Activated CD4-positive, alpha-beta memory T cell treated with anti-CD3 and anti-CD28 coated beads for 36 hours (primary cell): ENCODE measurements at regions of chr5 and their contacts with region 1.

Region 1: DNA sequence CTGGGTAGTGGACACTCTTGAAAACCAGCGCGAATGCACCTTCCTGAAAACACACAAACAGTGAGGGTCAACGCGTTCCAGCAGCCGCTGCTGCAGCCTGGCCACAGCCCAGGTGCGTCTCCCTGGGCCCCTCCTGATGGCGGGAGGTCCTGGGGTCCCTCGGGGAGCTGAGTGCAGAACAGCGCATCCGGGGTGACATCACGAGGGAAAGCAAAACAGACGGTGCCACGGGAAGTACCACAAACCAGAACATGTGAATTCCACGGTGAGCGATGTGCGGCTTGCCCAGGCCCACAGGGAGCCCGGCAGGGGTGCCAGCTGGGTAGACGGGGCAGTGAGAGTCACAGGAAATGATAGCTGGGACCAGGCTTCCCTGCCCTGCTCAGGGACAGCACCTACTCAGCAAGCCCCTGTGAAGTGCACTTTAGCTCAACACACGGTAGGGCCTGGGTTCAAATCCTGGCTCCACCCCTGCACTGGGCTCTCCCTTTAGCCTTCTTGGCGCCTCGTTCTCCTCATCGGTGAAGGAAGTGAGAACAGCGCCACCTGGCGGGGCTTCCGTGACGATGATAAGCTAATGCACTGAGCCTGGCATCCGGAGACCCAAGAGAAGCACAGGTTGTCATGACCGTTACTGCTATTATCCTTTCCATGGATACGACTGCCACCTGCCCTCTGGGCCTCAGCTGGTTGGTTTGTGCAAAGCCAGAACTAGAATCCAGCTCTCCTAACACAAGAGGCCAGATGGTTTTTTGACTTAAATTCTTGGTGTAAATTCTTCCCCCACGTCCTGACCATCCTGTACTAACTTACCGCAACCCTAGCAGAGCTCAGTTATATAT is 24.6 kb downstream of the GFPT2 start:
- DNase-seq: peak; percentile 90
- H3K4me3 Mint-ChIP-seq: no peak overlapping the region
- H3K27ac Mint-ChIP-seq: no peak overlapping the region
- H3K4me1 Mint-ChIP-seq: no peaks in the 10 kb centered on the region
- H3K27me3 Mint-ChIP-seq: peaks cover 6% of the 10 kb centered on the region

Region 2: DNA sequence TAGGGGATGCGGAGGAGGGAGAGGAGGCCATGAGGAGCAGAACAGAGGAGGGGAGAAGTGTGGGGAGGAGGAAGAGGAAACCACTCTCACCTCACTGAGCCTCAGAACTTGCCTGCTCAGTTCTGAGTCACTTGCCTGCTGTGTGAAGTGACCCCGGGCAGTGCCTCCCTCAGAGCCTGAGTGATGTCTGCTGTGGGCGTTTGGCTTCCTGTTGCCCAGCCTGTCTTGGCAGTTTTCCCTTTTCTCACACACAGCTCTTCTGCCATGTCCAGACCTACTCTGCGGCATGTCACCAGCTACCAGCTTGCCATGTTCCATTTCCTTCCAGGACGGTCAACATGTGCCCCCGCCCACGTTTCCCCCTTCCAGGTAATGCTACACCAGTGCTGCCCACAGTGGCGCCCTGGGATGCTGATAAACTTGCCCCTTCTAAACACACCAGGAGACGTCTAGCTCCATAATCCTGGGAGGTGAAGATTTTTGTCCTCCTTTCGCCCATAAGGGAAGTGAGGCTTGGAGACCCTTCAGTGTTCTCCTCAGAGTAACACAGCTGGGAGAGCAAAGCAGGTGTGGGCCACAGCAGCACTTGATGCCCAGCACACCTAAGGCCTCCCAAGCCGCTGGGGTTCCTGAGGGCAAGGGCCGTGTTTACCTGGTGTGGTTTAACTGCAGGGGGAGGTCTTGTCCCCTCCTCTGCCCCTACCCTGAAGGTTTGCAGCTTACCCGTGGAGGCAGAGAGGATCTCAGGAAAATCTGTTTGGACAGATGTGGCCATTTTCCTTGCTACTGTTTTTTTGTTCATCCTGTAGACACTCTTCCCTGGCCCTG is 193.2 kb before region 1 on chr5:
- CTCF ChIA-PET with region 1: no interaction called
- POLR2A ChIA-PET with region 1: no interaction called
- intact Hi-C with region 1: loop called (anchors 10 kb)
- DNase-seq: peak; percentile 72
- H3K4me3 Mint-ChIP-seq: no peak overlapping the region
- H3K27ac Mint-ChIP-seq: peak overlapping the region; percentile 29
- H3K4me1 Mint-ChIP-seq: peaks cover 9% of the 10 kb centered on the region
- H3K27me3 Mint-ChIP-seq: peaks cover 5% of the 10 kb centered on the region

Region 3: GRCh38 chr5:180315762-180316212 is 12.7 kb before region 1 on chr5:
- CTCF ChIA-PET with region 1: interaction called, 62 read pairs
- POLR2A ChIA-PET with region 1: interaction called, 3 read pairs
- intact Hi-C with region 1: no loop called
- DNase-seq: peak; percentile 82
- H3K4me3 Mint-ChIP-seq: peak overlapping the region; percentile 20
- H3K27ac Mint-ChIP-seq: peak overlapping the region; percentile 18
- H3K4me1 Mint-ChIP-seq: peaks cover 2% of the 10 kb centered on the region
- H3K27me3 Mint-ChIP-seq: no peaks in the 10 kb centered on the region

Region 4: GRCh38 chr5:180343831-180344327 is 15.4 kb after region 1 on chr5:
- CTCF ChIA-PET with region 1: interaction called, 14 read pairs
- POLR2A ChIA-PET with region 1: no interaction called
- intact Hi-C with region 1: no loop called
- DNase-seq: no peak
- H3K4me3 Mint-ChIP-seq: no peak overlapping the region
- H3K27ac Mint-ChIP-seq: no peak overlapping the region
- H3K4me1 Mint-ChIP-seq: no peaks in the 10 kb centered on the region
- H3K27me3 Mint-ChIP-seq: peaks cover 5% of the 10 kb centered on the region

Region 5: DNA sequence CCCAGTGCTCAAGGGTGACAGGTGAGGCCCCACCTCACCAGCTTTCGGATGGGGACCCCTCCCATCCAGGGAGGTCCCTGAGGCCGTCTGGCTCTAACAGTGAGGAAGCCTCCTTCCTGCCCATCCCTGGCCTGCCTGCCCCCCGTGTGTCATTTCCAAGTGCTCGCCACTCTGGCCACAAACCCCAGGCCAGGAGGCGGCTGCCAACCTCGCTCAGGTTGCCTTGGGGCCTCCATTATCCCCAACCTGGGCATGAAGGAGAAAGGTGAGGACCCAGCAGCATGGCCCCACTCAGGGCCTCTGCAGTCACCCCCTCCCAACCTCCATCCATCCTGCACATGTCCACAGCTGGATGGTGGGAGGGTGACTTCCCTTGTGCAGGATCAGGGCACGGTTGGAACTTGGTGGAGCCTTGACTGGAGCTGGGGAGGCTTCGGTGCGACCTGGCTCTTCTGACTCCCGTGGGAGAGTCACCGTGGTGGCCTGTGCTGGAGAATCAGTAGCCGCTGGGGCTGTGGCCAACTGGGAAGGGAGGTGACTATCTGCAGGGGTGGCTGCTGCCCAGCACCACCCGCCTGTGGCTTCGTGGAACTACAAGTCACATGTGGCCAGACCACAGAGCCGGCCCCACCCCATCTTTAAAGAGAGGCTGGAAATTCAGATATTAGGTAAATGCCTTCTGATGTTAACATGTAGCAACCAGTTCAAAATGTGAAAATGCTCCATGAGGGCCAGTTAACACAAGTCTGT is 62.1 kb after region 1 on chr5:
- CTCF ChIA-PET with region 1: no interaction called
- POLR2A ChIA-PET with region 1: no interaction called
- intact Hi-C with region 1: no loop called
- DNase-seq: no peak
- H3K4me3 Mint-ChIP-seq: no peak overlapping the region
- H3K27ac Mint-ChIP-seq: no peak overlapping the region
- H3K4me1 Mint-ChIP-seq: no peaks in the 10 kb centered on the region
- H3K27me3 Mint-ChIP-seq: peaks cover 5% of the 10 kb centered on the region